ENCODE measurements at regions of chr19 and their contacts with region 1.

Region 1: DNA sequence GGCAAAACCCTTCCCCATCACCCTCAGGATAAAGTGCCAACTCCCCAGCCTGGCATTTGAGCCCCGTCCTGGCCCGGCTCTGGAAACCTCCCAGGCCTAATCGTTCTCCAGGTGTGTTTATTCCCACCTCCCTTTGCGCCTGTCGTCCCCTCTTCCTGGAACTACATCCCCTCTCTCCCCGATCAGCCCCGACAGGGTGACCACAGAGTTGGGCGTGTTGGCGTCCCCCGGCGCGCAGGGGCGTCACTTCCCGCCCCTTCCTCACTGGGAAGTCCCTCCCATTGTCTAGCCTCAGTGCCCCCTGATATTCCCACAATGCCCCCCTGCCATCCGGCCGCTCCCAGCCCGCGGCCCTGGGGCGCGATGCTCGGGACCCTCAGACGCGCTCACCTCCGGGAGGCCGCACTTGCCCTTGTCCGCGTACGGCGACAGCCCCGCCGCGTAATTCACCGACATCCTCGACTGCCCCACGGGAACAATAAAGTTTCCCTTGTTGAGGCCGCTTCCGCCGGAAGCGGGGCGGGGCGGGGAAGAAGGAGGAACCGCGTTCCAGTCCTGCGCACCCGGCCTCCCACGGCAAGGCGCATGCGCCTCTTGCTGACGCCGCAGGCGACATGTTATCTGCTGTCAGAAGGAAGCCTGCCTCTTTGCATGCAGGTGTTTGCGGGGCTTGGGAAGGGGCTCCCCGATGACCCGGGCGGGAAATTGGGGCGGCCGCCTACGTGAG is at the starts of genes ANKRD24 and SIRT6:
- DNase-seq: peak; percentile 98
- H3K4me3 ChIP-seq: peak within 1 kb of the TSS; percentile 88
- H3K27ac ChIP-seq: peak within 1 kb of the TSS; percentile 76
- H3K4me1 ChIP-seq: peaks cover 25% of the 10 kb centered on the region
- CTCF ChIP-seq: no peak
- total RNA-seq, gene ANKRD24: 1.7 and 2.8 TPM in 2 replicates
- total RNA-seq, gene SIRT6: 29.1 and 31.7 TPM in 2 replicates

Region 2: GRCh38 chr19:4139614-4140236 is 42.5 kb before region 1 on chr19:
- CTCF ChIA-PET with region 1: no interaction called
- POLR2A ChIA-PET with region 1: no interaction called
- intact Hi-C with region 1: loop called (anchors 1 kb)
- DNase-seq: peak; percentile 70
- H3K4me3 ChIP-seq: no peak overlapping the region
- H3K27ac ChIP-seq: no peak overlapping the region
- H3K4me1 ChIP-seq: peaks cover 8% of the 10 kb centered on the region
- CTCF ChIP-seq: peak; percentile 86

Region 3: DNA sequence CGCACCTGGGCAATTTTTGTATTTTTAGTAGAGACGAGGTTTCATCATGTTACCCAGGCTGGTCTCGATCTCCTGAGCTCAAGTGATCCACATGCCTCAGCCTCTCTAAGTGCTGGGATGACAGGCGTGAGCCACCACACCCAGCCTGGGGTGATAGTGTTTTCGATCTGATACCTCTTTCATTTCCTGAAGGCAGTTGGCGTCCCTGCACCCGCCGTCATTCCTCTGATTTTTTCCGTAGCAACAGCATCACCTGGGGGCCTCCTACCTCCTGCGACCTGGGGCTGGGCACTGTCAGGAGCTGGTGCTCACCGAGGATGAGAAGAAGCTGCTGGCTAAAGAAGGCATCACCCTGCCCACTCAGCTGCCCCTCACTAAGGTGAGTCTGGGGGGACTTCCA is 18.0 kb before region 1 on chr19:
- CTCF ChIA-PET with region 1: no interaction called
- POLR2A ChIA-PET with region 1: no interaction called
- intact Hi-C with region 1: loop called (anchors 1 kb)
- DNase-seq: no peak
- H3K4me3 ChIP-seq: no peak overlapping the region
- H3K27ac ChIP-seq: no peak overlapping the region
- H3K4me1 ChIP-seq: no peaks in the 10 kb centered on the region
- CTCF ChIP-seq: no peak

Region 4: GRCh38 chr19:4246767-4247593 is 64.7 kb after region 1 on chr19 and contains the start of gene YJU2:
- CTCF ChIA-PET with region 1: no interaction called
- POLR2A ChIA-PET with region 1: no interaction called
- intact Hi-C with region 1: loop called (anchors 2 kb)
- DNase-seq: peak; percentile 100
- H3K4me3 ChIP-seq: peak within 1 kb of the TSS; percentile 74
- H3K27ac ChIP-seq: peak within 1 kb of the TSS; percentile 83
- H3K4me1 ChIP-seq: peaks cover 27% of the 10 kb centered on the region
- CTCF ChIP-seq: peak; percentile 86
- total RNA-seq, gene YJU2: 37.8 and 38.2 TPM in 2 replicates